GM10248 (cell line): ENCODE measurements at regions of chr10 and their contacts with region 1.

Region 1: GRCh38 chr10:74900297-74900696 is 73.9 kb downstream of the KAT6B start:
- DNase-seq: peak; percentile 38
- CTCF ChIP-seq: no peak

Region 2: GRCh38 chr10:74771054-74771453 is 129.2 kb before region 1 on chr10:
- CTCF ChIA-PET with region 1: no interaction called
- POLR2A ChIA-PET with region 1: no interaction called
- DNase-seq: no peak
- CTCF ChIP-seq: no peak

Region 3: GRCh38 chr10:74888962-74889663 is 11.2 kb before region 1 on chr10:
- CTCF ChIA-PET with region 1: interaction called, 31 read pairs
- POLR2A ChIA-PET with region 1: no interaction called
- DNase-seq: no peak
- CTCF ChIP-seq: peak; percentile 14

Region 4: DNA sequence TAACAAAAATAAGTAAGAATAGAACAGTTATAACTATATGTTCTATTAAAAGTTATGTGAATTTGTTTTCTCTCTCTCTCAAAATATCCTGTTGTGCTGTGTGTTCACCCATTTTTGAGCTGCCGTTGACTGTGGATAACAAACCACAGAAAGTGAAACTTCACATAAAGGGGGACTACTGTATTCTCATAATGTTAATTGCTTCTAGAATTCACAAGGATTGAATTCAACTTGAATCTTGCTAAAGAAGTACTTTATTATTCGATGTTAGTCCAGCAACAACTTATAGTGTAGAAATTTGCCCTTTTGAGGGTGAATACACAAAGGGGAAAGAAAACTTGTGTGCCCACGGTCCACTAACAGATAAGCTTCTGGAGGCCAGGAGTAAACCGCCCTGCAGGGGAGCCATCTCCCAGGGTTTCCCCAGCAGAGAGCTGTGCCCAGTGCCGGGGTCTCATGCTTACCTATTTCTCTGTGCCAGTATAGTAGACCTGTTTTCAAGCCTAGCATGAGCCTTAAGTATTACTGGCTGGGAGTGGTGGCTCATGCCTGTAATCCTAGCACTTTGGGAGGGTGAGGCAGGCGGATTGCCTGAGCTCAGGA is 13.2 kb after region 1 on chr10:
- CTCF ChIA-PET with region 1: interaction called, 46 read pairs
- POLR2A ChIA-PET with region 1: no interaction called
- DNase-seq: no peak
- CTCF ChIP-seq: no peak

Region 5: GRCh38 chr10:74932648-74933047 is 32.4 kb after region 1 on chr10:
- CTCF ChIA-PET with region 1: interaction called, 11 read pairs
- POLR2A ChIA-PET with region 1: no interaction called
- DNase-seq: no peak
- CTCF ChIP-seq: no peak